ENCODE measurements at regions of chr2 and their contacts with region 1.

Region 1: DNA sequence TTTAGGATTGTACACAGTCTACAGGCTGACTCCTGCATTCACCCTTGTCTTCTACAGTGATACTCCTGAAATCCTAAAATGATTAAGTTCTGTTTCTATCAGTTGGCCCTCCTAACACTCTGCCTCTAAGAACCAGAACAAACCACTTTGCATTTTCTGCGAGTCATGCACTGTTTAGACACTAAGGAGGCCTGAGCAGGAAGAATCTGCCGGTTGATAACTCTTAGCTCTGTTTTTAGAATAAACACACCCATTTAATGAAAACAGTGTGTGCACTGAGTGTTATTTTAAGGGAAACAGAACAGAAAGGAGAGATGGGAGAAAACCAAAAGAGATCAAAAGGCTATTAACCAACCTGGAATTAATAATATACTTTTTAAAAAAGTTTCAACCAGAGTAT is 22.9 kb upstream of the SSB start:
- DNase-seq: no peak
- ATAC-seq: no peak
- H3K4me3 ChIP-seq: no peak overlapping the region
- H3K27ac ChIP-seq: no peak overlapping the region
- H3K4me1 ChIP-seq: peaks cover 35% of the 10 kb centered on the region
- H3K27me3 ChIP-seq: no peaks in the 10 kb centered on the region
- CTCF ChIP-seq: no peak
- EP300 ChIP-seq: no peak
- POLR2A ChIP-seq: no peak
- RAD21 ChIP-seq: no peak

Region 2: GRCh38 chr2:169446452-169446851 is 329.3 kb before region 1 on chr2:
- CTCF ChIA-PET with region 1: no interaction called
- POLR2A ChIA-PET with region 1: no interaction called
- in situ Hi-C with region 1: loop called (anchors 5 kb)
- intact Hi-C with region 1: no loop called
- DNase-seq: no peak
- ATAC-seq: no peak
- H3K4me3 ChIP-seq: no peak overlapping the region
- H3K27ac ChIP-seq: no peak overlapping the region
- H3K4me1 ChIP-seq: no peaks in the 10 kb centered on the region
- H3K27me3 ChIP-seq: peaks cover 0 to 8% of the 10 kb centered on the region in 2 experiments; a peak in 1 of 5 replicates
- CTCF ChIP-seq: no peak
- EP300 ChIP-seq: no peak
- POLR2A ChIP-seq: no peak
- RAD21 ChIP-seq: no peak

Region 3: GRCh38 chr2:170013802-170014551 is 238.2 kb after region 1 on chr2:
- CTCF ChIA-PET with region 1: no interaction called
- POLR2A ChIA-PET with region 1: no interaction called
- in situ Hi-C with region 1: no loop called
- intact Hi-C with region 1: no loop called
- DNase-seq: no peak
- ATAC-seq: no peak
- H3K4me3 ChIP-seq: no peak overlapping the region
- H3K27ac ChIP-seq: no peak overlapping the region
- H3K4me1 ChIP-seq: no peaks in the 10 kb centered on the region
- H3K27me3 ChIP-seq: no peaks in the 10 kb centered on the region
- CTCF ChIP-seq: no peak
- EP300 ChIP-seq: no peak
- POLR2A ChIP-seq: no peak
- RAD21 ChIP-seq: no peak

Measured in HepG2 (cell line).